Breast epithelium (tissue), 4 donors: ENCODE measurements at regions of chr13 and their contacts with region 1.

Region 1: GRCh38 chr13:51589793-51590192 is 5.5 kb downstream of the WDFY2 start:
- DNase-seq: no peak
- H3K4me3 ChIP-seq: no peak overlapping the region
- H3K27ac ChIP-seq: peak overlapping the region; percentile 22 to 34
- H3K4me1 ChIP-seq: peaks cover 0 to 15% of the 10 kb centered on the region in 2 donors
- H3K27me3 ChIP-seq: no peaks in the 10 kb centered on the region
- CTCF ChIP-seq: no peak
- POLR2A ChIP-seq: no peak

Region 2: DNA sequence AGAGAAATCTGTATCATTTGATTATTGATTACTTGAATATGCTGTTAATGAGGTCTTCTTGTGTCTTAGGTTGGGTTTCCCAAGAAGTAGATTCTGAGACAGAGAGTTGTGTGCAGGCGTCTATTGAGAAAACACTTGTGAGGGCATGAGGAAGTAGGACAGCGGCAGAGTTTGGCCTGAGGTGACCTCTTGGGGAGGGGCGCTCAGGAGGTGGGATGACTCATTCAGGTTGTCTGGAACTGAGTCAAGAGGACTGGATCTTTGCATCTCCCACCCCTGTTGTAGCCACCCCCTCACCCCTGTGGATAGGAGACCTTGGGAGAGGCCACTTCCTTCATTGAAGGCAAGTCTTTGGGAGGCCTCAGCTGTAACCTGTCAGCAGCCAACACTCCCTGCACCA is 40.7 kb before region 1 on chr13:
- intact Hi-C with region 1: no loop called
- DNase-seq: no peak
- H3K4me3 ChIP-seq: no peak overlapping the region
- H3K27ac ChIP-seq: no peak overlapping the region
- H3K4me1 ChIP-seq: no peaks in the 10 kb centered on the region
- H3K27me3 ChIP-seq: no peaks in the 10 kb centered on the region
- CTCF ChIP-seq: no peak
- POLR2A ChIP-seq: no peak

Region 3: DNA sequence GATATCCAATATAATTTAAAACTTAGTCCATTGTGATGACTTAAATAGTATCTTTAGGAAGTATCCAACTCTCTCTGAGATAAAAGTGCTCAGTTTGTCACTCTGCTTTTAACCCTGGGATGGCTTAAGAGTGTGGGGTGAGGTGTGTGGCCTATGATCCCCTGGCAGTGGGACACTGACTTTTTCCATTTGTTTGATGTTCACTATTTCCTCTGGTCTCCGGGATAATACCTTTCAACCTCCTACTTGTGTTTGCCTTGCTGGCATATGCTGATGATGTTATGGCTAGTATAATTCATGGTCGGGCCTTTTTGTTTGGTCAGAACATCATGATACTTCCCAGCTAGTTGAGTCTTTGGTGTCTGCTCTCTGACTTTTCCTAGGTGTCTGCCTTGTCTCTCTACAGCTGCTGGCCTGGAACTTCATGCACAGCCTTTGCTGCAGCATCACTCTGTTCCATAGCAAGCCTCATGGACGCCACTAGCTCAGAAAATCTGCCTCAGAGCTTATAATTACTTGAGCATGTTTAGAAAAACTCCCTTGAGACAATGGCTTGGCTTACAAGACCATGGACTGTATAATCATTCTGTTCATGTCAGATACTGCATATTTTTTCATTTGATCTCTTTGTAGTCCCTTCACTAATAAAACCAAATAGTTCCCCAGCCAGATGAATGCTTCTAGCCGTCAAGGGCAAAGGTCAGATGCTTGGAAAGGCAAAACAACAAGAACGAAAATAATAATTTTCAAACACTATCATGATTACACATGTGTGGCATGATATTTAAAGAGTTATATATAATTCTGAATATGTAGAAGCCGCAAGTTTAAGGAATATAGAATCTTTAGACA is 69.7 kb after region 1 on chr13:
- intact Hi-C with region 1: loop called (anchors 2 kb)
- DNase-seq: no peak
- H3K4me3 ChIP-seq: no peak overlapping the region
- H3K27ac ChIP-seq: no peak overlapping the region
- H3K4me1 ChIP-seq: peaks cover 0 to 3% of the 10 kb centered on the region in 2 donors
- H3K27me3 ChIP-seq: no peaks in the 10 kb centered on the region
- CTCF ChIP-seq: no peak
- POLR2A ChIP-seq: no peak